ENCODE measurements at regions of chr16 and their contacts with region 1.

Region 1: GRCh38 chr16:67077871-67078270 is 31.9 kb upstream of the PHAF1 start:
- DNase-seq: no peak
- ATAC-seq: no peak
- H3K4me3 ChIP-seq: no peak overlapping the region
- H3K27ac ChIP-seq: no peak overlapping the region
- H3K4me1 ChIP-seq: no peaks in the 10 kb centered on the region
- H3K27me3 ChIP-seq: no peaks in the 10 kb centered on the region
- CTCF ChIP-seq: no peak

Region 2: GRCh38 chr16:66934153-66934838 is 143.6 kb before region 1 on chr16 and contains the start of gene CIAO2B:
- intact Hi-C with region 1: no loop called
- DNase-seq: peak; percentile 90 to 92
- ATAC-seq: peak; percentile 81 to 94 (median 90)
- H3K4me3 ChIP-seq: peak within 1 kb of the TSS; percentile 62 to 99 (median 86)
- H3K27ac ChIP-seq: peak within 1 kb of the TSS; percentile 83 to 99 (median 95)
- H3K4me1 ChIP-seq: peaks cover 21 to 55% (median 42%) of the 10 kb centered on the region in 9 donors
- H3K27me3 ChIP-seq: no peaks in the 10 kb centered on the region
- CTCF ChIP-seq: no peak
- total RNA-seq, gene CIAO2B: 103 to 196 (median 111) TPM

Region 3: GRCh38 chr16:67040906-67041305 is 37.0 kb before region 1 on chr16:
- intact Hi-C with region 1: loop called in 2 of 10 experiments (anchors 5 to 10 kb)
- DNase-seq: no peak
- ATAC-seq: no peak
- H3K4me3 ChIP-seq: no peak overlapping the region
- H3K27ac ChIP-seq: no peak overlapping the region
- H3K4me1 ChIP-seq: peaks cover 0 to 31% (median 7%) of the 10 kb centered on the region in 9 donors
- H3K27me3 ChIP-seq: no peaks in the 10 kb centered on the region
- CTCF ChIP-seq: no peak

Region 4: GRCh38 chr16:67109407-67110135 is 31.7 kb after region 1 on chr16 and contains the start of gene PHAF1:
- intact Hi-C with region 1: no loop called
- DNase-seq: peak; percentile 93 to 96
- ATAC-seq: peak; percentile 98 to 99 (median 98)
- H3K4me3 ChIP-seq: peak within 1 kb of the TSS; percentile 76 to 100 (median 94)
- H3K27ac ChIP-seq: peak within 1 kb of the TSS; percentile 55 to 96 (median 86)
- H3K4me1 ChIP-seq: peaks cover 7 to 56% (median 25%) of the 10 kb centered on the region in 9 donors
- H3K27me3 ChIP-seq: no peaks in the 10 kb centered on the region
- CTCF ChIP-seq: no peak
- total RNA-seq, gene PHAF1: 8.9 to 12.7 (median 11.7) TPM

Measured in heart right ventricle (tissue), 16 donors.